Caco-2 (cell line): ENCODE measurements at regions of chr2 and their contacts with region 1.

Region 1: GRCh38 chr2:175251425-175252041 is 70.0 kb upstream of the ATP5MC3 start:
- DNase-seq: peak in 1 of 2 experiments; percentile 29
- H3K4me3 ChIP-seq: no peak overlapping the region
- H3K4me3 Mint-ChIP-seq: no peak overlapping the region
- H3K27ac Mint-ChIP-seq: no peak overlapping the region
- H3K4me1 ChIP-seq: no peaks in the 10 kb centered on the region
- H3K4me1 Mint-ChIP-seq: no peaks in the 10 kb centered on the region
- H3K27me3 ChIP-seq: no peaks in the 10 kb centered on the region
- H3K27me3 Mint-ChIP-seq: peaks cover 16% of the 10 kb centered on the region
- CTCF ChIP-seq: peak; percentile 61 to 68

Region 2: GRCh38 chr2:175203621-175204496 is 47.7 kb before region 1 on chr2:
- CTCF ChIA-PET with region 1: interaction called, 15 read pairs
- POLR2A ChIA-PET with region 1: no interaction called
- intact Hi-C with region 1: no loop called
- DNase-seq: peak; percentile 66 to 71
- H3K4me3 ChIP-seq: no peak overlapping the region
- H3K4me3 Mint-ChIP-seq: no peak overlapping the region
- H3K27ac Mint-ChIP-seq: no peak overlapping the region
- H3K4me1 ChIP-seq: no peaks in the 10 kb centered on the region
- H3K4me1 Mint-ChIP-seq: peaks cover 7% of the 10 kb centered on the region
- H3K27me3 ChIP-seq: no peaks in the 10 kb centered on the region
- H3K27me3 Mint-ChIP-seq: peaks cover 10% of the 10 kb centered on the region
- CTCF ChIP-seq: peak; percentile 66 to 70

Region 3: GRCh38 chr2:175393851-175394250 is 142.3 kb after region 1 on chr2:
- CTCF ChIA-PET with region 1: no interaction called
- POLR2A ChIA-PET with region 1: no interaction called
- intact Hi-C with region 1: no loop called
- DNase-seq: no peak
- H3K4me3 ChIP-seq: no peak overlapping the region
- H3K4me3 Mint-ChIP-seq: no peak overlapping the region
- H3K27ac Mint-ChIP-seq: no peak overlapping the region
- H3K4me1 ChIP-seq: no peaks in the 10 kb centered on the region
- H3K4me1 Mint-ChIP-seq: no peaks in the 10 kb centered on the region
- H3K27me3 ChIP-seq: no peaks in the 10 kb centered on the region
- H3K27me3 Mint-ChIP-seq: peaks cover 9% of the 10 kb centered on the region
- CTCF ChIP-seq: no peak